AG04449 (cell line): ENCODE measurements at regions of chr16 and their contacts with region 1.

Region 1: GRCh38 chr16:29729116-29729521 is 16.7 kb downstream of the C16orf54 start:
- DNase-seq: no peak
- H3K4me3 ChIP-seq: 0 out of 2 replicates have a peak overlapping the region, but pooled peaks have one; percentile 6
- CTCF ChIP-seq: peak; percentile 62

Region 2: DNA sequence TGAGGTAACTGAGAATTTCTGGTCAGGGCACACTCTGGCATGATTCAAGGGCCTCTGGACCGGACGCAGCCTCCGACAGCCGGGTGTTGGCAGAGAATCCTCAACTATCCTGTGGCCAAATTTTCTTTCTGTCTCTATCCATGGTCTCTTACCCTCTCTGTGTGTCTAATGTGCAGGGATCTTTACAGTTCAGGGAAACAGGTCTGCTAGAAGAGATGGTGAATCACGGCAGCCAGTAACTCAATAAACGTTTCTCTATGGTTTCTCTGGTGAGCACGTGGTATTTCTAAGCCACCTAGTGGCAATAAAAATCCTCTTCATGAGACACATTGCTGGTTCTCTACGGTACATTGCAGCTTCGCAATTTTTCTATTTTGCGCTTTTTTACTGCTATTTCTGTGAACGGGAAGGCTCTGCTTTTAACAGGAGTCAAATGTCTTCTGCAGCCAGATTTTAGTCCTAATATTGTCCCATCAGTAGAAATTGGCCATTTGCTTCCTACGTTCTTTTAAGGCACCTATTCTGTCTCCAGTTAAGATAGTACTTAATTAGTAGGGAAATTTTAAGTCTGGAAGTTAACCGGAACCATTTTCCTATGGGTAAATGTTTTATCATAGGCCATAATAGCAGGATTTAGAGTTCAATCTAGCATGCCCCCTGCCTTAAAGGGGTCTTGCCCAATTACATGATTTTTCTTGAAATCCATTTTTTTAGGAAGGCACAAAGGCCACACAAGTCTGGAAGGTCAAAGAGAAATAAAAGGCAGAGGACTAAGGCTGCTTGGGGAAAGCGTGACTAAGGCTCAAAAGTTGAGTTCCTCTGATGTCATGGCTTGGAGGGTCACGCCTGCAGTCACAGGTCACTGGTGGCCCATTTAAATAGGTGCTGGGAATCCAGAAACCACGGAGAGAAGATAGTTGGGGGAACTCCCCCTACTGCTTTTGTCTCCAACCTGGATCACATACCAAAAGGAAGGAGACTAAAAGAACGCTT is 18.6 kb before region 1 on chr16:
- CTCF ChIA-PET with region 1: interaction called, 35 read pairs
- POLR2A ChIA-PET with region 1: no interaction called
- DNase-seq: peak; percentile 19
- H3K4me3 ChIP-seq: no peak overlapping the region
- CTCF ChIP-seq: peak; percentile 54